ENCODE measurements at regions of chr7 and their contacts with region 1.

Region 1: DNA sequence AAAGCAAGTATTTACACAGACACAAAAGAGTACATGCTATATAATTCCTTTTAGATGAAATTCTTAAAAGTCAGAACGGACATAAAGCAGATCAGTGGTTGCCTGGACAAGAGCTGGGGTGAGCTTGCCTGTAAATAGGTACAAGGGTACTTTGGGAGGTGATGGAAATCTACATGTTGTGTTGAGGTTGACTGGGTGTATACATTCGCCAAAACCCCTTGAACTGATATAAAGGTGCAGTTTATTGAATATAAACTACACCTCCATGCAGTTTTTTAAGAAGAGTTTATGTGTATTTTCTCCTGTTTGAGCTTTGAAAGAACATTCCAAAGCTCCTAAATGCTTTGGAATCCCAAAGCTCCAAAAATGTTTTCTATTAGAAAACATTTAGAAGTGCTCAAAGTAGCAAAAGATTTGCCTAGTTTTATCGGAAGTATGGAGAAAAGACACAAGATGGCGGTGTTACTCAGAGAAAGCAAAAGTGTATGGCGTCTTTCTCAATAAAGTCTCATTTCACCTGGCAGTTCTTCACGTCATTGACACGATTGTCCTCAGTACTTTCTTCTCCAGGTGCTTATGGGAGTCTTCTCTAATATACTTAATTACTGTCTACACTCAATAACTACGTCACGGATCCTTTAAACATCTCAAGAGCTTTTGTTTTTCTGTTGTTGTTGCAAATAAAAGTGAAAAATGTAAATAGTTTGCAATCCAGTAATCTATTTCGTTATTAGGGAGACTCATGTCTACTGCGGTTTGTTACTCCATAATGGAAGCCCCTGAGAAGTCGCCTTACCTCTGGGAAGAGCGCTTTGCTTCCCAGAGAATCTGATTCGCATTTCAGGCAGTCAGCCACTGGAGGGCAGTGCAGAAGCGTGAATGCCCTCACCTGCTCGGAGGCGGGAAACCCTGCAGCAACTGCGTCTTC is 14.7 kb upstream of the SEC61G start:
- DNase-seq: peak; percentile 46
- H3K4me3 Mint-ChIP-seq: peak overlapping the region; percentile 69
- H3K27ac Mint-ChIP-seq: no peak overlapping the region
- H3K4me1 Mint-ChIP-seq: peaks cover 4% of the 10 kb centered on the region
- H3K27me3 Mint-ChIP-seq: peaks cover 25% of the 10 kb centered on the region

Region 2: DNA sequence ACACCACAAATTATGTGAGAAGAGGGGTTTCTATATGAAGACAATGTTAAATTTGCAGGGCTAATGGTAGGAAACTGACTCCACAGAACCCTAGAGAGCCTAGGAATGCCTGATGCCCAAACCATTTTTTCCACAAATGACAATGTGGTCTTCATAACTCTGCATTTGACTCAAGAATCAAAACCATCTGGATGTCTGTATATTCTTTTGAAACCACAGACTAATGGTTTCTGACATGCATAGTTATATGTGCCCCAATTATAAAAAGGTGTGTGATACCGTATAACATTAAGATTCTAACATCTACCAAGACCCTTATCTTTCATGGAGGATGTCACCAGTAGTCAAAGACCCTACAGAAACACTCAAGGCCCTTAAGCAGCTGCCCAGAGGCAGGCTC is 35.0 kb before region 1 on chr7:
- intact Hi-C with region 1: no loop called
- DNase-seq: no peak
- H3K4me3 Mint-ChIP-seq: no peak overlapping the region
- H3K27ac Mint-ChIP-seq: no peak overlapping the region
- H3K4me1 Mint-ChIP-seq: peaks cover 2% of the 10 kb centered on the region
- H3K27me3 Mint-ChIP-seq: no peaks in the 10 kb centered on the region

Region 3: DNA sequence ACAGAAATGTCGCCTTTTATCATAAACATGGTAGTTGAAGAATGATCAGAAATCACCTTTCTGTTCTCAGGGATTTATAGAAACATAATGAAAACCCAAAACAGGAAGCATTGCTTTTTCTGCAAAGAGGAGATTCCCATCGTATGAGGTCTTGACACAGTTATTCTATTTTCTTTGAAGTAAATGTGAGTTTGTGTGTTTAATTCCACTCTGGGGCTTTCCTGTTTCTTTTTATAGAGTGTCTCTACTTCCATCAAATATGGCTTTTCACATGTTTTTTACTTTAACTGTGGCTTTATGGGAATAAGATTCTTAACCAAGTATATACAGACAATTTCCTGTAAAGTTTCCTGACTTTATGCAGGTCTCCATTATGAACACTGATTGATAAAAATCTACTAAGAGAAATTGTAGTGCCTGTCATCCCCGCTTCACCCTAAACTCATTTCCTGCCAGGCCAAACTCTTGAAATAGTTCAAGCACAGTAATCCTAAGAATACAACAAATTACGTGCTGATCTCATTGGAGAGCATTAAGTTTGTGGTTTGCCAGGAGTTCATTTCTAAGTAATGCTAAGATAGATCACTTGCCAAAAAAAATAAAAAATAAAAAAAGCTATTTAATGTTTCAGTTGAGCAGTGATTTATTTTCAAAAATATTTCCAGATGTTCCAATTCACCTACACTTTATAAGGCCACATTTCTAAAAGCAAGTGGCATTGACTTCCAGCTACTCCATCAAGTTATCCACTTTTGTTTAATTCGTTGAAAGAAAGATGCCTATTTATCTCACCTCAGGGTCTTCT is 37.5 kb after region 1 on chr7:
- intact Hi-C with region 1: no loop called
- DNase-seq: no peak
- H3K4me3 Mint-ChIP-seq: no peak overlapping the region
- H3K27ac Mint-ChIP-seq: no peak overlapping the region
- H3K4me1 Mint-ChIP-seq: no peaks in the 10 kb centered on the region
- H3K27me3 Mint-ChIP-seq: no peaks in the 10 kb centered on the region

Region 4: DNA sequence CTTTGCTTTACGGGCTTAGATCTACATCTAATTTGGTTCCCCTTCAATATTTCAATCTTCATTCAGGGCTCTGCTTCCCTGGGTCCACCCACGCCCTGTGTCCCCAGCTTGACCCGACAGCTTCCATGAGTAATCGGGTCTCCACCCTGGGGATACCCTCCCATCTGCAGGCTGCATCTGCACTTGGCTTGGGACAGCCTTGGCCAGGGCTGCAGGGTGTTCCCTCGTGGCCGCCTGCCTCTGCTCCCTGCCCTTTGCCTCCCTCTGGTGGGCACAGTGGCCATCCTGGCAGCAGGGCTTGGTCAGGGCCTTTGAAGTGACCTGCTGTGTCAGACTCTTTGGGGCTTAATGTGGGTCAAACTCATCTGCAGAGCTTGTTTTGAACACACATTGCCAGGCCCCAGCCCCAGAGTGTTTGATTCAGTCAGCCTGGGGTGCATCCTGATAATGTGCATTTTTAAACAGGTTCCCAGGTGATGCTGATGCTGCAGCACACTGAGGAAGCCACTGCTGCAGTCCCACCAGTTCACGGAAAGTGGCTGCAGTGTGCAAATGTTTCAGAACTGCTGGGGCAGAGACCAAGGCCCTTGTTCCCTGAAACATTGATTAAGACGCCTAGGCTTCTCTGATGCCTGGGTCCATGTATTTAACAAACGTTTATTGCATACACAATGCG is 65.9 kb after region 1 on chr7:
- intact Hi-C with region 1: loop called (anchors 10 kb)
- DNase-seq: no peak
- H3K4me3 Mint-ChIP-seq: no peak overlapping the region
- H3K27ac Mint-ChIP-seq: no peak overlapping the region
- H3K4me1 Mint-ChIP-seq: no peaks in the 10 kb centered on the region
- H3K27me3 Mint-ChIP-seq: no peaks in the 10 kb centered on the region

Region 5: DNA sequence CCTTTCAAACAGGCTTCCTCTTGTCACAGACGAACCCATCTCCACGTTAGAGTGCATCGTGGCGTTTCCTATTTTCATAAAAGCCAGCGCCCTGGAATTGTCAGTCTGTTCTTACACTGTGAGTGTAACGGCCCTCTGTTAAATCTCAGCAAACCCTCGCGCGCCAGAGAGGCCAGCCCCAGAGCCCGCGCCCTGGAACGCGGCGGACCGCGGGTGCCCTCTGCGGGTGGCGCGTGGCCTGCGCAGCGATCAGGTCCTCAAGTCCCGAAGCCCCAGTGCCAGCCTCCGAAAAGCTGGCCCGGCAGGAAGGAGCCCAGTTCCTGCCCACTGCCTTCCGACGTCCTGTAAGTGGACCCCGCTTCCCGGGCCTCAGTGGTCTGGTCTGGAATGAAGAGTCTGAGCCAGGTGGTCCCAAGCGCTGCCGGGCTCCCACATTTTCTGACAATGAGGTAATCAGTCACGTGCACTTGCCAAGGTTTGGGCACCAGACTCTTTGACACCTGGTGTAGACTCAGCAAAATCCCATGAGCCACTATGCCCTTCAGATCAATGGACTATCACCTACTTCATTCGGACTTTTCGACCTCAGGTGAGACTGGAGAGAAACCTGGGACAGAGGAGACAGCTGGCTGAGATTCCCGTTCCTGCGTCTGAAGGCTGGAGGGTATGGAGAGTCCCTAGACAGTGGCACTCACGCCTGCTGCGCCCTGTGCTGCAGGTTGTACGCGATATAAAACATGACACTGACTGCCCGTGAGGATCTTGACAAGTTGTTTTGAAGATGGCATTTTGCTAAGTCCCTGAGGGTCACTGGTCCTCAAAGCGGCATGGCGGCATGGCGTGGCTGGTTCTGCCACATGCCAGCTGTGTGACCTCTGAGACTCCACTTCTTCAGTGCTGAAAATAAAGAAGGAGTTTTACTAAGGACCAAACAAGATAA is 482.0 kb after region 1 on chr7:
- intact Hi-C with region 1: loop called (anchors 1 kb)
- DNase-seq: peak; percentile 57
- H3K4me3 Mint-ChIP-seq: peak overlapping the region; percentile 86
- H3K27ac Mint-ChIP-seq: no peak overlapping the region
- H3K4me1 Mint-ChIP-seq: peaks cover 5% of the 10 kb centered on the region
- H3K27me3 Mint-ChIP-seq: peaks cover 43% of the 10 kb centered on the region

Region 6: DNA sequence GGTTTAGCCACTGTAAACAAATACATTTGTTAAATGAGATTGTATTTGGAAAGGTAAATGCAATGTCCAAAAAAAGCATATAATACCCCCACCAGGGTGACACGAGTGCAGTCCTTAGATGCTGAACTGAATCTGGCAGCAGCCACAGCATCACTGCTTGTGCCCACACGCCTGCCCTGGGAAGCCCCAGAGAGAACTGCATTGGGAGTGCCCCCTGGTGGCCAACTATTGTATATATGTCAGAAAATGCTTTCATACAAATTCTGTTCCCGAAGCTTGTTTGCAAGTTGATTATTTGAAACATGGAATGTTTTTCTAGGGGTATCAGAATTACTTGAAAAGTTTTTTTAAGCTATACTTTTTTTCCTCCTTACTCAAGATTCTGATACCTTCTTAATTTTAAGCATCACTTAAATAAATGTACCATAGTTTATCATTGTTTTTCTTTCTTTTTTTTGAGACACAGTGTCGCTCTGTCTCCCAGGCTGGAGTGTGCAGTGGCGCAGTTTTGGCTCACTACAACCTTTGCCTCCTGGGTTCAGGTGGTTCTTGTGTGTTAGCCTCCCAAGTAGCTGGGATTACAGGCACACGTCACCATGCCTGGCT is 641.5 kb after region 1 on chr7:
- intact Hi-C with region 1: loop called (anchors 5 kb)
- DNase-seq: peak; percentile 58
- H3K4me3 Mint-ChIP-seq: no peak overlapping the region
- H3K27ac Mint-ChIP-seq: no peak overlapping the region
- H3K4me1 Mint-ChIP-seq: peaks cover 2% of the 10 kb centered on the region
- H3K27me3 Mint-ChIP-seq: no peaks in the 10 kb centered on the region